ENCODE measurements at regions of chr15 and their contacts with region 1.

Region 1: GRCh38 chr15:34209421-34210282 is at the start of gene KATNBL1:
- H3K4me3 Mint-ChIP-seq: peak within 1 kb of the TSS; percentile 79
- H3K27ac Mint-ChIP-seq: peak within 1 kb of the TSS; percentile 77
- H3K4me1 Mint-ChIP-seq: peaks cover 24% of the 10 kb centered on the region
- H3K27me3 Mint-ChIP-seq: no peaks in the 10 kb centered on the region

Region 2: DNA sequence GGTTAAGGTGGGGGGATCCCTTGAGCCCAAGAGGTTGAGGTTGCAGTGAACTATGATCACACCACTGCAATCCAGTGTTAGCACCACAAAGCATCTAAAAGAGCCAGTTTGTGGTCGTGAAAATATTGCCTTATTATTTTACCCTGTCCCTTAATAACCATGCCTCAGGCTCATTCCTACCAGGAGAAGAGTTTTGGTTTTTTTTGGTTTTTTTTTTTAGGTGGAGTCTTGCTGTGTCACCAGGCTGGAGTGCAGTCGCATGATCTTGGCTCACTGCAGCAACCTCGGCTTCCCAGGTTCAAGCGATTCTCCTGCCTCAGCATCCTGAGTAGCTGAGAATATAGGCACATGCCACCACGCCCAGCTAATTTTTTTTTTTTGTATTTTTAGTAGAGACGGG is 152.7 kb before region 1 on chr15:
- intact Hi-C with region 1: loop called (anchors 1 kb)
- H3K4me3 Mint-ChIP-seq: no peak overlapping the region
- H3K27ac Mint-ChIP-seq: no peak overlapping the region
- H3K4me1 Mint-ChIP-seq: peaks cover 3% of the 10 kb centered on the region
- H3K27me3 Mint-ChIP-seq: no peaks in the 10 kb centered on the region

Region 3: GRCh38 chr15:34109797-34110663 is 99.6 kb before region 1 on chr15:
- intact Hi-C with region 1: loop called (anchors 1 kb)
- H3K4me3 Mint-ChIP-seq: no peak overlapping the region
- H3K27ac Mint-ChIP-seq: no peak overlapping the region
- H3K4me1 Mint-ChIP-seq: no peaks in the 10 kb centered on the region
- H3K27me3 Mint-ChIP-seq: peaks cover 2% of the 10 kb centered on the region

Region 4: DNA sequence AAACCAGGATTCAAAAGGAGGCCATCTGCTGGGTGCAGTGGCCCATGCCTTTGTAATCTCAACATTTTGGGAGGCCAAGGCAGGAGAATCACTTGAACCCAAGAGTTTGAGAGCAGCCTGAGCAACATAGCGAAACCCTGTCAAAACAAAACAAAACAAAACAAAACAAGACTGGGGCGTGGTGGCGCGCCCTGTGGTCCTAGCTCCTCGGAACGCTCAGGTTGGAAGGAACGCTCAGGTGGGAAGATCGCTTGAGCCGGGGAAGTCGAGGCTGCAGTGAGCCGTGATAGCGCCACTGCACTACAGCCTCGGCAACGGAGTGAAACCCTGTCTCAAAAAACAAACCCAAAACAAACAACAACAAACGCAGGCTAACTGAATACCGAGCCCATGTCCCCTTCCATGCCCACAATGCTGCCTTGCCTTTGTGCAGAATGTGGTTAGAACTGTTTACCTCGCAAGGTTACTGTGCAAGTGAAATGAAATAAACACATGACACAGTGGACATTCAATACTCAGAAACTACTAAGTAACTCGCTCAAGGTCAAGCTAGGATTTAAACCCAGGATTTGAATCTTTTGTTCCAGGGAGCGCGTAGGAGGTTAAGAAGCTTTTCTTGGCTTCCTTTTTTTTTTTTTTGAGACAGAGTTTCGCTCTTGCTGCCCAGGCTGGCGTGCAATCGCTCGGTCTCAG is 14.4 kb after region 1 on chr15:
- intact Hi-C with region 1: loop called (anchors 2 kb)
- H3K4me3 Mint-ChIP-seq: peak overlapping the region; percentile 92
- H3K27ac Mint-ChIP-seq: peak overlapping the region; percentile 100
- H3K4me1 Mint-ChIP-seq: peaks cover 20% of the 10 kb centered on the region
- H3K27me3 Mint-ChIP-seq: no peaks in the 10 kb centered on the region

Measured in dendritic cell treated with granulocyte-macrophage colony-stimulating factor and Interleukin-4, amounts not matched to agents 40 ng/mL and 50 ng/mL, for 4 days (primary cell).